ENCODE measurements at regions of chr11 and their contacts with region 1.

Region 1: GRCh38 chr11:122781378-122782195 is 56.7 kb upstream of the CRTAM start:
- DNase-seq: peak; percentile 71
- H3K4me3 ChIP-seq: no peak overlapping the region
- CTCF ChIP-seq: peak; percentile 92

Region 2: DNA sequence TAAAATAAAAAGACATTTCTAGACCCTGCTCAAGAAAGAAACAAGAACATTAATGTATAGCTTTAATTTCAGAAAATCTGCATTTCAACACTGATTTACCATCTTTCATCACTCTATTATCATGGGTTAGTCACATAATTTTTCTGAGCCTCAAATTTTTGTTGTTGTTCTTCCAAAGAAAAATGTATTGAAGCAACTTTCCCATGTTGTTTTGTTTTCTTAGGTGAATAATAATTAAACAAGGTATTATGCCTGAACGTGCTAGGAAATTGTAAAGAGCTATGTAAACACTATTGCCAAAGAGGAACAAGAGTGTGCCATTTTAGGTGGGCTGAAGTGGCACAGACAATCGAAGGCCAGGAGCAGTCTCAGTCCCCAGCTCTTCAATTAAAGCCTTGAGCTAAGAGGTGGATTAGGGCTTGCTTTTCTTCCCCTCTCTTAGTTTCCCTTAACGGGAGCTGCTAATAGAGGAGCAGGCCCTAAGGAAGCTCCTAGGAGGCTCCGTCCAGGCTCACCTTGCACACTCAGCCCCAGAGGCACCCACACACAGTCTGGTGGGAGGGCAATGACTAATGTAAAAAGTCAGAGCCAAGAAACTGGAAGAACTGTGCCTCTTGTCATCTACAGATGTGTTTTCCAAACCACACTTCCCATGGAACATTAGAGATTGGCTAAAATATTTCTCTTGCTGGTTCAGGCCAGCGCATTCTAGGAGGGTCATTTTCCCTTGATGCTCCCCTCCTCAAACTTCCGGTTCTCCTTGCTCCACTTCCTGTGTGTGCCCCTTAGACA is 134.8 kb before region 1 on chr11:
- CTCF ChIA-PET with region 1: interaction called, 645 read pairs
- POLR2A ChIA-PET with region 1: no interaction called
- DNase-seq: no peak
- H3K4me3 ChIP-seq: no peak overlapping the region
- CTCF ChIP-seq: no peak

Region 3: GRCh38 chr11:122711831-122712381 is 69.7 kb before region 1 on chr11:
- CTCF ChIA-PET with region 1: interaction called, 13 read pairs
- POLR2A ChIA-PET with region 1: interaction called, 3 read pairs
- DNase-seq: no peak
- H3K4me3 ChIP-seq: no peak overlapping the region
- CTCF ChIP-seq: peak; percentile 29

Region 4: GRCh38 chr11:122754553-122755322 is 26.8 kb before region 1 on chr11:
- CTCF ChIA-PET with region 1: interaction called, 71 read pairs
- POLR2A ChIA-PET with region 1: no interaction called
- DNase-seq: no peak
- H3K4me3 ChIP-seq: no peak overlapping the region
- CTCF ChIP-seq: peak; percentile 33

Region 5: DNA sequence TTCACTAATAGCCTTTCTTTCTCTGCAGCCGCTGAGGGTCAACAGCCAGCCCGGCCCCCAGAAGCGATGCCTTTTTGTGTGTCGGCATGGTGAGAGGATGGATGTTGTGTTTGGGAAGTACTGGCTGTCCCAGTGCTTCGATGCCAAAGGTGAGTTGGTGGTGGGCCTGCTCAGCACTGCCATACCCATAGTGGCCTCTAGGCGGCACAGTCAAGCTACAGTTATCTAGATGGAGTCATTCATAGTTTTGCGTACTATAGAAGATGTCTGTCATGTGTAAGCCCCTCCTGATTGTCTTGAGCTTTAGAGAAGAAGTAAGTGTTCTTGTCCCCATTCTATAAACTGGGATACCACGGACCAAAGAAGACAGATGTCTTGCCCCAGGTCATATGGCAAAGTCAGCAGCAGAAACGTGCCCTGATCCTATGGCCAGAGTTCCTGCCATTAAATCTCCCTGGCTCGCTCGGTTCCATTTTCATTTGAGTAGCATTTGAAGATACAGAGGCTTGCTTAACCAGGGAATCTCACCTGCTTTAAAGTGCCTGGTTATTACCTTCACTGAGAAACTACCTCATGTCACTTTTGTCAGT is 14.6 kb after region 1 on chr11:
- CTCF ChIA-PET with region 1: interaction called, 165 read pairs
- POLR2A ChIA-PET with region 1: no interaction called
- DNase-seq: no peak
- H3K4me3 ChIP-seq: no peak overlapping the region
- CTCF ChIP-seq: peak; percentile 87

Region 6: GRCh38 chr11:123054301-123055065 is 272.9 kb after region 1 on chr11:
- CTCF ChIA-PET with region 1: no interaction called
- POLR2A ChIA-PET with region 1: no interaction called
- DNase-seq: no peak
- H3K4me3 ChIP-seq: no peak overlapping the region
- CTCF ChIP-seq: peak; percentile 58

Measured in AG04449 (cell line).